Right lobe of liver (tissue), 6 donors: ENCODE measurements at regions of chr22 and their contacts with region 1.

Region 1: GRCh38 chr22:46587492-46588278 is 32.5 kb upstream of the GRAMD4 start:
- DNase-seq: peak; percentile 44 to 61 (median 52)
- ATAC-seq: peak; percentile 7 to 63 (median 24)
- H3K4me3 ChIP-seq: no peak overlapping the region
- H3K27ac ChIP-seq: no peak overlapping the region
- H3K4me1 ChIP-seq: peaks cover 0 to under 1% (median 0%) of the 10 kb centered on the region in 4 donors
- H3K27me3 ChIP-seq: no peaks in the 10 kb centered on the region
- CTCF ChIP-seq: no peak
- POLR2A ChIP-seq: no peak

Region 2: GRCh38 chr22:46399251-46399999 is 188.3 kb before region 1 on chr22:
- intact Hi-C with region 1: no loop called
- DNase-seq: no peak
- ATAC-seq: no peak
- H3K4me3 ChIP-seq: no peak overlapping the region
- H3K27ac ChIP-seq: no peak overlapping the region
- H3K4me1 ChIP-seq: no peaks in the 10 kb centered on the region
- H3K27me3 ChIP-seq: no peaks in the 10 kb centered on the region
- CTCF ChIP-seq: no peak
- POLR2A ChIP-seq: no peak

Region 3: GRCh38 chr22:46626911-46627805 is 39.5 kb after region 1 on chr22:
- intact Hi-C with region 1: loop called (anchors 5 to 10 kb)
- DNase-seq: peak; percentile 21 to 54 (median 46)
- ATAC-seq: peak in 2 of 4 donors; percentile 29 to 32
- H3K4me3 ChIP-seq: no peak overlapping the region
- H3K27ac ChIP-seq: no peak overlapping the region
- H3K4me1 ChIP-seq: no peaks in the 10 kb centered on the region
- H3K27me3 ChIP-seq: no peaks in the 10 kb centered on the region
- CTCF ChIP-seq: no peak
- POLR2A ChIP-seq: no peak

Region 4: DNA sequence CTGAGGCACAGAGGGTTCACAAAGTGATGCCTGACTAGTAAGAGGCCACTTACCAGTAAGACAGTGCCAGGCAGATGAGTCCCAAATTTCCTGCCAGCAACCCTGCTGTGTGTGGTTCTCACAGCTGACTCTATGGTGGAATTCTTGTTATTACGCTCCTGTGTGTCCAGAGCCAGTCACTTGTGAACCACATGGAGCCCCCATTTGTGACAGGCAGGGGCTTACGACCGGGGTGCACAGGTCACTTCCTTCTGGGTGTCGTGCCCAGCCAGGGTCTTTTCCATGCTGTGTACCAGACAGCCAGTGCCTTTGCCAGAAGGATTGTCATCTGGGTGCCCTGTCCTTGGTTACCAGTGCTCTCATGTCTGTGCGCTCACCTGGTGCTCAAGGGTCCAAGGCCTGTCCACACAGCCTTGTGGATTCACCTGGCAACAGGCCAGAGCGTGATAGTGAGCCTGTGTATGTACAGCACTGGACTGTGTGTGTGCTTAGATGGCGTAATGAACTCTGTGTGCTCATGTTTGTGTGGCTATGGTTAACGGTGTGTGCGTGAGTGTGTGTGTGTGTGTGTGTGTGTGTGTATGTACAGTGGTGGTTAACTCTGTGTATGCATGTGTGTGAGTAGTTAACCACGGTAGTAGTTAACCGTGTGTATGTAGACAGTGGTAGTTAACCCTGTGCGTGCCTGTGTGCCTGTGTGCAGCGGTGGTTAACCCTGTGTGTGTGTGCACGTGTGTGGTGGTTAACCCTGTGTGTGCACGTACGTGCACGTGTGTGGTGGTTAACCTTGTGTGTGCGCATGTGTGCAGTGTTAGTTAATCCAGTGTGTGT is 51.1 kb after region 1 on chr22:
- intact Hi-C with region 1: loop called in 1 of 2 experiments (anchors 10 kb)
- DNase-seq: peak; percentile 94 to 96 (median 94)
- ATAC-seq: peak; percentile 66 to 79 (median 72)
- H3K4me3 ChIP-seq: peak overlapping the region; percentile 32 to 66 (median 38)
- H3K27ac ChIP-seq: peak overlapping the region; percentile 92 to 94 (median 94)
- H3K4me1 ChIP-seq: peaks cover 0 to 26% (median 2%) of the 10 kb centered on the region in 4 donors
- H3K27me3 ChIP-seq: no peaks in the 10 kb centered on the region
- CTCF ChIP-seq: no peak
- POLR2A ChIP-seq: peak; percentile 61

Region 5: GRCh38 chr22:46661221-46661851 is 73.7 kb after region 1 on chr22:
- intact Hi-C with region 1: no loop called
- DNase-seq: peak in 1 of 3 donors; percentile 65
- ATAC-seq: peak in 3 of 4 donors; percentile 22 to 50 (median 31)
- H3K4me3 ChIP-seq: no peak overlapping the region
- H3K27ac ChIP-seq: peak overlapping the region; percentile 46 to 88 (median 57)
- H3K4me1 ChIP-seq: peaks cover 0 to 24% (median 10%) of the 10 kb centered on the region in 4 donors
- H3K27me3 ChIP-seq: no peaks in the 10 kb centered on the region
- CTCF ChIP-seq: no peak
- POLR2A ChIP-seq: no peak